ENCODE measurements at regions of chrX and their contacts with region 1.

Region 1: GRCh38 chrX:124239911-124240310 is 92.5 kb upstream of the TEX13D start:
- DNase-seq: peak; percentile 38
- H3K4me3 Mint-ChIP-seq: peak overlapping the region; percentile 58
- H3K27ac Mint-ChIP-seq: peak overlapping the region; percentile 73
- H3K4me1 Mint-ChIP-seq: peaks cover 32% of the 10 kb centered on the region
- H3K27me3 Mint-ChIP-seq: no peaks in the 10 kb centered on the region

Region 2: DNA sequence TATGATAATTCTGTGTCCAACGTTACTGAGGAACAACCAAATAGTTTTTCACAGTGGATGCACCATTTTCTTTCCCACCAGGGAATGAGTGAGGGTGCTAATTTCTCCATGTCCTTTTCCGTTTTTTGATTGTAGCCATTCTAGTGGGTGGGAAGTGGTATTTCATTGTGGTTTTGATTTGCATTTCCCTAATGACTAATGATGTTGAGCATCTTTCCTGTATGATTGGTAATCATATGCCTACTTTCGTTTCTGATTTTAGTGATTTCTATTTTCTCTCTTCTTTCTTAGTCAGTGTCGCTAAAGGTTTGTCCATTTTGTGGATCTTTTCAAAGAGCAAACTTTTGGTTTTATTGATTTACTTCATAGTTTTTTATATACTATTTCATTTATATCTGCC is 60.5 kb after region 1 on chrX:
- intact Hi-C with region 1: loop called (anchors 1 kb)
- DNase-seq: no peak
- H3K4me3 Mint-ChIP-seq: no peak overlapping the region
- H3K27ac Mint-ChIP-seq: peak overlapping the region; percentile 63
- H3K4me1 Mint-ChIP-seq: peaks cover 20% of the 10 kb centered on the region
- H3K27me3 Mint-ChIP-seq: no peaks in the 10 kb centered on the region

Region 3: GRCh38 chrX:124358800-124359383 is 119.0 kb after region 1 on chrX:
- intact Hi-C with region 1: loop called (anchors 1 kb)
- DNase-seq: no peak
- H3K4me3 Mint-ChIP-seq: peak overlapping the region; percentile 61
- H3K27ac Mint-ChIP-seq: peak overlapping the region; percentile 84
- H3K4me1 Mint-ChIP-seq: peaks cover 51% of the 10 kb centered on the region
- H3K27me3 Mint-ChIP-seq: no peaks in the 10 kb centered on the region

Measured in activated T-helper 2 cell treated with anti-CD3 and anti-CD28 coated beads, Interferon-gamma antibody, Interleukin-2, Interleukin-4, amounts not matched to agents 10 μg/mL and 5 μg/mL and 100 μg/mL, durations not matched to agents 14 hours and 24 hours and 36 hours (primary cell).